ENCODE measurements at regions of chr17 and their contacts with region 1.

Region 1: DNA sequence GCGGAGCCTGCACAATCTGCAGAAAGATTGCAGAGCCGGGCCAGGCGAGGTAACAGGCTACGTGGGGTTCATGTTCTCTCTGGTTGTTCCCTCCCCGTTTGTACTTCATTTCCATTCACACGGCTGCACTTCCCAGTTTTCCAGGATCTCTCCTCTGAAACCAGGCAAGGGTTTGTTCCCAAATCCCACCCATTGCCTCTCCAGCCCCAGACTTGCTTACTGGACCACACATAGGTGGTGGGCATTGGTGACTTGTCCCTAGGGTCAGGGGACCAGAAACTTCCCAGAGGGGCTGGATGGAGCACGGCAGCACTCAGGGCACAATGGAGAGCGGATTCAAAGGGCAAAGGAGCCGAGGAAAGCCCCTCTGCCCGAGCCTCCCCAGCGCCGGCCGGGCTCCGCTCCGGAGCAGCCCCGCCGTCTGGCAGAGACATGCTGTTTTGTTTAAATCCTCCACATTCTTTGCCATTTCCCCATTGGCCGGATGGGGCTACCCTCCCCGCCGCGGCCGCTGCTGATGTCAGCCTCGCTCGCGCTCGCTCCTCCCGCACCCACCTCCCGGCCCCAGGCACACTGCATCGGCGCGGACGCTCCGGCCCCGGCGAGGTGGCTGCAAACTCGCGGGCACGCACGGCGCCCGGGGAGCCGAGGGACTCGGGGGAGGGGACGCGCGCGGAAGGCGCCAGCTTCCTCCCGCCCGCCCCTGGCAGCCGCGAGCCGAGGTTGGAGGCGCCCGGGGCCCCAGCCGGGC is at the start of gene PITPNC1:
- DNase-seq: peak; percentile 96
- H3K4me3 Mint-ChIP-seq: peak within 1 kb of the TSS; percentile 92
- H3K27ac Mint-ChIP-seq: peak within 1 kb of the TSS; percentile 93
- H3K4me1 Mint-ChIP-seq: peaks cover 27% of the 10 kb centered on the region
- H3K27me3 Mint-ChIP-seq: no peaks in the 10 kb centered on the region
- total RNA-seq, gene PITPNC1: 18.7 and 22.3 TPM in 2 replicates

Region 2: DNA sequence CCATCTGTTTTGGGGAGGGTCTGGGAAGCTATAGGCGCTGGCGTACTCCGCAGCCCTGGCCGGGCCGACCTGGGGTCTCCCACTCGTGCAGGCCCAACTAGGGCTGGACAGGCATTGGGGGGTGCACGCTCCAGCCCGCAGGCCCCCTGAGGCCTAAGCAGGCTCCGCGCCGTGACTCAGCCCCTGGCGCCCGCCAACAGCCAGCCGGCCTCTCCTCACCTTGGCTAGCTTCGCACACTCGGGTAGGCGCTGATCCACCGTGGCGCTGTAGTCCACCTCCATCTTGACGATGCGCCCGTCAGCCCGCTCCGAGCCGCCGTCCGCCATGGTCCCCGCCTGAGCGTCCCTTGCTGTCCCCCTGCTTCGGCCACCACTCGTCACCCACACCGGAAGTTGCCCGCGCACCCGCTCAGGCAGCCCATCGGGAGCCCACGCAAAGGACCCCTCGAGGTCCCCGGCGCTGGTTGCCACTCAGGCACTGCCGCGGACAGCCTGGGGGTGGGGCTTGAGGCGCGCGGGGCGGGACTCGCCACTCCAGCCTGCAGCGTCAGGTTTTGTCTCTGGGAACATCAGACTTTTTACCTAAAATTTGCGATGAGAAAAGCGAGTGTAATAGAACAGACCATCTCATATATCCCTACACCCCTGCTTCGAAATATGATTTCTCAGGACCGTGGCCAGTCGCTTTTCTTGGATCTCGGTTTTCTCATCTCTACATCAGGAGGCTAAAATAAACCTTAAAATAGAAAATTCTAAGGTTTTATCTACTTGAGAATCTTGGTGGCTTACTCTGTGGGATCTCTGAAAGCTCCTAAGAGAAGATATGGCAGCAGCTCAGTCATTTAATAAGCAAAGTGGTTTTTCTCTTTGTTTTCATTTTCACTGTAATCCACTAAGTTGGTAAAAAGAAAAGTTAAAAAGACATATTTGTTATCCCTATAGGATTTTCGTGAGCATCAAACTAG is 10.4 kb before region 1 on chr17 and contains the start of gene PSMD12:
- intact Hi-C with region 1: loop called (anchors 1 kb)
- DNase-seq: peak; percentile 98
- H3K4me3 Mint-ChIP-seq: peak within 1 kb of the TSS; percentile 97
- H3K27ac Mint-ChIP-seq: peak within 1 kb of the TSS; percentile 93
- H3K4me1 Mint-ChIP-seq: peaks cover 41% of the 10 kb centered on the region
- H3K27me3 Mint-ChIP-seq: no peaks in the 10 kb centered on the region
- total RNA-seq, gene PSMD12: 92.3 and 93.6 TPM in 2 replicates

Region 3: DNA sequence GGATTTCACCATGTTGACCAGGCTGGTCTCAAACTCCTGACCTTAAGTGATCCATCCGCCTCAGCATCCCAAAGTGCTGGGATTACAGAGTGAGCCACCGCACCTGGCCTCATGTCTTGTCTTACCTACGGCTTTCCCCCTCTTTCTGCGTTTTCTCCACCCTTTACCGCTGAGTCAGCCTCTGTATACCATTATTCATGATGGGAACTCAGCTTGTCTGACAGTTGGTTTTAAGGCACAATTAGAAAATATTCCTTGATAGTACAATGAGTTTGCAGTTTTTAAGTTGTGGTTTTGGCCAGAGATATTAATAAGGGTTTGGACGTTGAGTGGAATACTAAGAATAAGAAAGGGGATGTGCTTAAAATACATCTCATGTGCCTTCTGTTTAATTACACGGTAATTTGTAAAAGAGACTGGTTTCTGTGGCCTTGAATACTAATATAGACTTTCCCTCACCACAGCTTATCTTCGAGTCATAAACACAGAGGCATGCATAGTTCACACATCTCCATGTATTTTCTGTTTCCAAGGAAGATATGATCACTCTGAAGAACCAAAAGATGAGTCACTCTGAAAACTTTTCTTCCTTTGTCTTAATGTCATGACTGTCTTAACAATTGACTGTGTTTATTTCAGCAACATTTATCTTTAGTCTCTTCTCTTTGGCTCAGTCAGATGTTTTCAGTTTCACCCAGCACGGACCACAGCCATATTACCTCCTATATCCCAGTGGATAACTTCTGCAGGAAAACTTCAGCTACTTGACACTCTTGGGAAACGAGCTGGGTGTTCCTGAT is 54.5 kb after region 1 on chr17:
- intact Hi-C with region 1: loop called (anchors 5 kb)
- DNase-seq: peak; percentile 66
- H3K4me3 Mint-ChIP-seq: peak overlapping the region; percentile 74
- H3K27ac Mint-ChIP-seq: peak overlapping the region; percentile 93
- H3K4me1 Mint-ChIP-seq: peaks cover 55% of the 10 kb centered on the region
- H3K27me3 Mint-ChIP-seq: no peaks in the 10 kb centered on the region

Region 4: GRCh38 chr17:67602956-67603355 is 226.0 kb after region 1 on chr17:
- intact Hi-C with region 1: loop called (anchors 1 kb)
- DNase-seq: peak; percentile 86
- H3K4me3 Mint-ChIP-seq: no peak overlapping the region
- H3K27ac Mint-ChIP-seq: no peak overlapping the region
- H3K4me1 Mint-ChIP-seq: peaks cover 6% of the 10 kb centered on the region
- H3K27me3 Mint-ChIP-seq: no peaks in the 10 kb centered on the region

Region 5: DNA sequence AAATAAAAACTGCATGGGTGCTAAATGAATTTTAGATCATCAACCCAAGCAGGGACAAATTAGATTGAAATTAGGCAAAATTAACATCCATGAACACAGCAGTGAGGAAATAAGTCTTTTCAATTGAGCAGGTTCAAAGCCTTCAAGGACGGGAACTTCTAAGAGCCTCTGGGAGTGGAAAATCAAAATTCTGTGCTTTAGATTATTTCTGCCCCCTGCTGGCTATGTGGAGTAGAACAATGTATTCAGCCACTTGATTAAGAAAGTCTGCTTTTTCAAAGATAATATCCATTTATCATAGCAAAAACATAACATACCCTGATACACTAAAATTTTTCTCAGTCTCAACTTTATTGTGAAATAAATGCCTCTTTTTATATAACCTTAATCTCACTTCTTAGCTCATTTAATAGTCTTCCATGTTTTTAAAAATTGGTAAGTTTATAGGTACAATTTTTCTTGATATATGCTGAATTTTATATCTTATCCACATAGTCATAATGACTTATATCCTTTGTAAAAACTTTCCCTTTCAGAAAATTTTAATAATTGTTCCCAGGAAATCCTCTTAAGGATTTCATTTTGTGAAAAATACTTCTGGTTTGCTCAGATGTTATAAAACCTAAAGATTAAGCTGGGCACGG is 312.7 kb after region 1 on chr17:
- intact Hi-C with region 1: loop called (anchors 1 kb)
- DNase-seq: peak; percentile 87
- H3K4me3 Mint-ChIP-seq: no peak overlapping the region
- H3K27ac Mint-ChIP-seq: no peak overlapping the region
- H3K4me1 Mint-ChIP-seq: peaks cover 4% of the 10 kb centered on the region
- H3K27me3 Mint-ChIP-seq: no peaks in the 10 kb centered on the region